ENCODE measurements at regions of chr19 and their contacts with region 1.

Region 1: GRCh38 chr19:49127674-49128544 is 8.6 kb downstream of the PPFIA3 start:
- DNase-seq: peak; percentile 96
- ATAC-seq: peak; percentile 98
- H3K4me3 Mint-ChIP-seq: peak overlapping the region; percentile 90
- H3K27ac Mint-ChIP-seq: peak overlapping the region; percentile 81
- H3K4me1 Mint-ChIP-seq: peaks cover 8% of the 10 kb centered on the region
- H3K27me3 Mint-ChIP-seq: peaks cover 8% of the 10 kb centered on the region

Region 2: GRCh38 chr19:48970923-48971395 is 156.9 kb before region 1 on chr19:
- POLR2A ChIA-PET with region 1: no interaction called
- DNase-seq: peak; percentile 87
- ATAC-seq: peak; percentile 71
- H3K4me3 Mint-ChIP-seq: no peak overlapping the region
- H3K27ac Mint-ChIP-seq: no peak overlapping the region
- H3K4me1 Mint-ChIP-seq: peaks cover 17% of the 10 kb centered on the region
- H3K27me3 Mint-ChIP-seq: no peaks in the 10 kb centered on the region

Region 3: DNA sequence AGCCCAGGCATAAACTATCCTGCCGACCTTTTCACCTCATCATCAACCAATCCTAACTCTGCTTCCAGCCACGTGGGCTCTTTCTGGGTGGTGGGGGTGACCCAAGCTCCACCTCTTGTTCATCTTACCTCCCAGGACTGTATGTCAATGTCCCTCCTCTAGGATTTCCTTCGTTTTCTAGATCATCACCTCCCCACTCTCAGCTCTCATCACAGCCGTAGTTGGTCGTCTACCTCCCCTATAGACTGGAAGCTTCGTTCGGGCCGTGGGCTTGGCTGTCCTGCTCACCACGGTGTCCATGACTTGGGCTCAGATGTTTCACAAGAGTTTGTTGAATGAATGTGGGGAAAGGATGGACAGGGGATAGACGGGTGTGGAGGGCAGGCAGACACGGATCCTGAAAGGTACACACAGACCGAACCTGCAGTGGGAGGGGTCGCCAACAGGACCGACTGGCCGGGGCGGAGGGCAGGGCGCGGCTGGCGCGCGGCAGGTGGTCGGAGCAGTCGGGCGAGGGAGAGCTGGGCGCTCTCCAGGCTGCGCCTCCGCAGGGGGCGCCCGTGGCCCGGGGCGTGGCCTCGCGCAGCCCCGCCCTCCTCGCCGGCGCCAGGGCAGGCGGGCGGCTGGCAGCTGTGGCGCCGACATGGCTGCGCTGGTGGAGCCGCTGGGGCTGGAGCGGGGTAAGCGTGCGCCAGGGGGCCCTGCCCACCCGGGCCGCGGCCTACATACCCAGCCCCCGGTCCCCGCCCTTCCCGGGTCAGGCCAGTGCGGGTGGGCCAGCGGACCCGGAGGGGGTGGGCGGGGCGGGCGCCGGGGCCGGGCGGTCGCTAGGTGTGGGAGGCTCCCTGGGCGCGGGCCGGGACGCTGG is 13.9 kb before region 1 on chr19 and contains the start of gene LIN7B:
- POLR2A ChIA-PET with region 1: interaction called, 11 read pairs
- DNase-seq: peak; percentile 96
- ATAC-seq: peak; percentile 63
- H3K4me3 Mint-ChIP-seq: peak within 1 kb of the TSS; percentile 91
- H3K27ac Mint-ChIP-seq: peak within 1 kb of the TSS; percentile 30
- H3K4me1 Mint-ChIP-seq: peaks cover 15% of the 10 kb centered on the region
- H3K27me3 Mint-ChIP-seq: no peaks in the 10 kb centered on the region
- total RNA-seq, gene LIN7B: 8.9 to 10.1 TPM